Cardiac septum (tissue), 1 donor: ENCODE measurements at regions of chr1 and their contacts with region 1.

Region 1: GRCh38 chr1:103106426-103107341 is 1.6 kb downstream of the COL11A1 start:
- DNase-seq: no peak

Region 2: DNA sequence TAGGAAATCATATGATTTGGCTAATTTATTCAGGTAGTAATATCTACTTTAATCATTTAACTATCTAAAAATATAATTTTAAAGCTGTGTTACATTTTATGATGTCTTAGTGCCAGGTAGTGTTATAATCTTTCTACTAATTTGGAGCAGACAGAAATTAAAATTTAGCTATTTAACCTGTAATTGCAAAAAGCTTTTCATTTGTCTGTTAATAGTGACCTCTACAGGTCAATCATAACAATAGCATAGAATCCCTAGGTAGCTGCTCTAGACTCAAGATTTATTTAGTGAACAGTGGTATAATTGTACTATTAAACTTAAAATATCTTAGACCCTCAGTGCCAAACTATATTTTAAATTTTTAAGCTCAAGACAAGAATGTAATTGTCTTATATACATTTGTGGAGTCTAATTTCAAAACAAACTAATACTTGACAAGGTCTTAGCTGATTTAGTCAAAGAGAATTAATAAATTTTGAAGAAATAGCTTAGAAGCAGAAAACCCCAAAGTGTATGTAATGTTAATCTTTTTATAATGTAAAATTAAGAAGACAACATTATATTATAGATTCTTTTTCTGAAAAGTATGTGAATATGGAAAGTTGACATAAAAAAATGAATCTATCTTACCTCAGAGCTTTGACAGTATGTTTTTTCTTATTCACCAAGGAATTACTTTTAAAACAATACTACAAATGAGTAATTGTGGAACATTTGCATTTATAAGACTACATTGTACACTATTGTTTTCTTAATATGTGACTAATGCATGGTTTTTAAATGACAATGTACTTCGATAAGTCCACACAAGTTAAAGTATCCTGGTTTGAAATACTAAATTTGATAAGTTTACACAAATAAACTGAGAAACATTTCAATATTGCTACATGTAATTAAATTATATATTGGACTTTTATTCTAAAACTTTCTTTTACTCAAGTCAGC is 354.7 kb after region 1 on chr1:
- intact Hi-C with region 1: loop called (anchors 5 kb)
- DNase-seq: no peak

Region 3: DNA sequence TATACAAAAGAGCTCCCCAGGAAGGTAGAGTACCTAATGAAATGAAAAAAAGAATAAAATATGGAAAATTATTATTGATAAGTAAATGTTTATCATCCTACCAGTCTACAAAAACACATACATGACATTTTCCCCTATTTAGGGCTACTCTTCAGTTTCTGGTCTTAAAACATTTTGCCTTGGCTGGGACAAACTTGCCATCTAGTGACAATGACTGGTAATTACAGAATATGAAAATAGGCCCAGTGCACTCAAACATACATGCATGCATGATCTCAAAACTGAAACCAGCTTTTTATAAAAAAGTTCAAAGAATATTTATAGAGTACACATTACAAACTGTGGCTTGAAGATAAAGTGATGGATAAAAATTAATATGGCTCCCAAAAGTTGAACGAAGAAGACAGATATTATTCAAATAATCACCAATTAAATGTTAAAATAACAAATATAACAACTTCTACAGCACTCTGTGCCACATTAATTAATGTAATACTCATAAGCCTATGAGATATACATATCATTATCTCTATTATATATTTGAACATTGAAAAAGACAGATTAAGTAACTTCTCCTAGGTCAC is 408.3 kb after region 1 on chr1:
- intact Hi-C with region 1: loop called (anchors 5 kb)
- DNase-seq: no peak